ENCODE measurements at regions of chr1 and their contacts with region 1.

Region 1: DNA sequence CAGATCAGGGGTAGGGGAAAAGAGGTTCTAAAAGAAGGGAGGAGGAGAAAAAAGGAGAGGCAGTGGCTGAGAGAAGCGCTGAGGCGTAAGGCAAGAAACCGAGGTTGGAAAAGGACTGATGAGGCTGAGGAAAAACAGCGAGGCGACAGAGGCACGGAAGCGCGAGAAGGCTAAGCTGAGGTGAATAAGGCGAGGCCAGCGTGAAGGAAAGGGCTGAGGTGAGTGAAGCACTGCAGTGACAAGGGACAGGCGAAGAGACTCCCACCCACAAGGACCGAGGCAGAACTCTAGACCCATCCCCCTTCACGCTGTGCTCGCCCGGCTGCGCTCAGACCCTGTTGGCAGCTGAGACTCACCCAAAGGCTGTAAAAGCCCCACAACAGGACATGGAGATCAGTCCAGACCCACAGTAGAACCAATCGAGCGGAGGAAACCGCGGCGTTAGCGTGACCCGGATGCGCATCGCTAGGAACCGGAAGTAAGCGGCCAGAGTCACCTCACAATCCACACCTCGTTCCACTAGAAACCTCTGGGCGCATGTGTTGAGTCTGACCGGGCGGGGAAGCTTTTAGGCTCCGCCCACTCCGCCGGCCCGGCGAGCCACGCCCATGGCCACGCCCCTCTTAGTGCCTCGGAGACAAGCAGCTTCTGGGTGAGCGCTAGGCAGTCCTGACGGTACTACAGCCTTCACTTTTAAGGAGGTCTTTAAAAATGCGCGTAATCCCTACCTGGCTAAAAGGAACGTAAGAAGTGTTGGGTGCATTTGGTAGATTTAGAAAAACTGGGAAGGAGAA is at the start of gene EYA3:
- DNase-seq: peak; percentile 98
- H3K4me3 ChIP-seq: peak within 1 kb of the TSS; percentile 59 to 99 (median 89)
- H3K27ac ChIP-seq: peak within 1 kb of the TSS; percentile 80 to 92
- H3K4me1 ChIP-seq: peaks cover 7 to 28% (median 14%) of the 10 kb centered on the region in 4 experiments
- H3K27me3 ChIP-seq: no peaks in the 10 kb centered on the region

Region 2: GRCh38 chr1:28104866-28105467 is 16.6 kb after region 1 on chr1:
- CTCF ChIA-PET with region 1: interaction called, 27 read pairs
- POLR2A ChIA-PET with region 1: no interaction called
- DNase-seq: no peak
- H3K4me3 ChIP-seq: no peak overlapping the region
- H3K27ac ChIP-seq: no peak overlapping the region
- H3K4me1 ChIP-seq: no peaks in the 10 kb centered on the region
- H3K27me3 ChIP-seq: no peaks in the 10 kb centered on the region

Region 3: GRCh38 chr1:28115267-28115666 is 26.9 kb after region 1 on chr1:
- CTCF ChIA-PET with region 1: interaction called, 27 read pairs
- POLR2A ChIA-PET with region 1: no interaction called
- DNase-seq: peak; percentile 92 to 98 (median 97)
- H3K4me3 ChIP-seq: peak overlapping the region in 2 of 7 experiments; percentile 11 to 26
- H3K27ac ChIP-seq: peak overlapping the region in 1 of 2 experiments; percentile 73
- H3K4me1 ChIP-seq: peaks cover 4 to 54% (median 27%) of the 10 kb centered on the region in 4 experiments
- H3K27me3 ChIP-seq: no peaks in the 10 kb centered on the region

Region 4: DNA sequence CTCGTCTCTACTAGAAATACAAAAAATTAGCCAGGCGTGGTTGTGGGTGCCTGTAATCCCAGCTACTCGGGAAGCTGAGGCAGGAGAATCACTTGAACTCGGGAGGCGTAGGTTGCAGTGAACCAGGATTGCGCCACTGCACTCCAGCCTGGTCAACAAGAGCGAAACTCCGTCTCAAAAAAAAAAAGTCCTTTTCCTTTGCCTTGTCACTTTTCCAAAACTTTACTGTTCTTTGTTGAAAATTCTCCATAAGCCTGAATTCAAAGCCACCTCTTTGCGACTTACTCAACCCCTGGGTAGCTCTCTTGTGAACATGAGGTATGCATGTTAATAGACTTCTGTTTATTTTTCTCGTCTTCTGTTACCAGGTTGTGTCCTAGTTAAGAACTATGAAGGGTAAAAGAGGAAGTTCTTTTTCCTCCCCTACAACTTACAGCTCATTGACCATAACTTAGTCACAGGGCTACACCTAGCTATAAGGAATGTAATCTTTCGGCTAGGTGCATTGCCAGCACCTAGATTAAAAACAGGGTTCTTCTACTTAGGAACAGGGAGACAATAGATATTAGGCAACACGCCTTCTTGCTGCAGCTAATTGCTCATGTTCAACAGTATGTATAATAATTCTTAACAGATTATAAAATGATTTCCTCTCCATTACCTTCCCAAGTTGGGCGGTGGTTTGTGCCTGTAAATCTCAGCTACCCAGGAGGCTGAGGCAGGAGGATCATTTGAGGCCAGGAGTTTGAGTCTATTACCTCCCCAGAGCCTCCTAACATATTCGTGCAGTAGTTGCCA is 47.2 kb after region 1 on chr1:
- CTCF ChIA-PET with region 1: interaction called, 13 read pairs
- POLR2A ChIA-PET with region 1: no interaction called
- DNase-seq: peak in 2 of 3 donors; percentile 85 to 89
- H3K4me3 ChIP-seq: peak overlapping the region in 1 of 7 experiments; percentile 28
- H3K27ac ChIP-seq: no peak overlapping the region
- H3K4me1 ChIP-seq: peaks cover 2 to 39% (median 9%) of the 10 kb centered on the region in 4 experiments
- H3K27me3 ChIP-seq: no peaks in the 10 kb centered on the region

Region 5: GRCh38 chr1:28154078-28154594 is 65.8 kb after region 1 on chr1:
- CTCF ChIA-PET with region 1: interaction called, 12 read pairs
- POLR2A ChIA-PET with region 1: no interaction called
- DNase-seq: no peak
- H3K4me3 ChIP-seq: no peak overlapping the region
- H3K27ac ChIP-seq: no peak overlapping the region
- H3K4me1 ChIP-seq: peaks cover 5 to 24% (median 18%) of the 10 kb centered on the region in 4 experiments
- H3K27me3 ChIP-seq: no peaks in the 10 kb centered on the region

Region 6: DNA sequence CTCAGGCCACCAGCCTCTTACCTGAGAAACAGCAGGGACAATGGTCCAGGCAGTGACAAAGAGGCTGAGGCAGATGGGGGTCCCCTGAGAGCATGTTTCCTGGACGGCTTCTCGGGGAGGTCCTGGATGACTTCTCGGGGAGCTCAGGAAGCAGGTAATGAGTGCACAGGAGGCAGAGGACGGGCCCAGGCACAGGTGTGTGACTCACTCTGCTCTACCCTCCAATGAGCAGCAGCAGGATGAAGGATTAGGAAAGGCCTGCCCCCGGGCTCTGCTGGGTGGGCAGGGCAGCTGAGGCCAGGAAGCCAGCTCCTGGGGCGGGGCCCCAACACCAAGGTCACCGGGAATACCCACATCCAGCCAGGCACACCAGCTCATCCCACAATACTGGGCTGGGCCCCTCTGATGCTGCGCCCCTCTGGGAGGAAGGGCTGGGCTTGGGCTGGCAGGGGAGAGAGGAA is 105.4 kb after region 1 on chr1:
- CTCF ChIA-PET with region 1: interaction called, 25 read pairs
- POLR2A ChIA-PET with region 1: interaction called, 3 read pairs
- DNase-seq: no peak
- H3K4me3 ChIP-seq: no peak overlapping the region
- H3K27ac ChIP-seq: no peak overlapping the region
- H3K4me1 ChIP-seq: peaks cover 0 to 32% (median 19%) of the 10 kb centered on the region in 4 experiments
- H3K27me3 ChIP-seq: no peaks in the 10 kb centered on the region

Region 7: DNA sequence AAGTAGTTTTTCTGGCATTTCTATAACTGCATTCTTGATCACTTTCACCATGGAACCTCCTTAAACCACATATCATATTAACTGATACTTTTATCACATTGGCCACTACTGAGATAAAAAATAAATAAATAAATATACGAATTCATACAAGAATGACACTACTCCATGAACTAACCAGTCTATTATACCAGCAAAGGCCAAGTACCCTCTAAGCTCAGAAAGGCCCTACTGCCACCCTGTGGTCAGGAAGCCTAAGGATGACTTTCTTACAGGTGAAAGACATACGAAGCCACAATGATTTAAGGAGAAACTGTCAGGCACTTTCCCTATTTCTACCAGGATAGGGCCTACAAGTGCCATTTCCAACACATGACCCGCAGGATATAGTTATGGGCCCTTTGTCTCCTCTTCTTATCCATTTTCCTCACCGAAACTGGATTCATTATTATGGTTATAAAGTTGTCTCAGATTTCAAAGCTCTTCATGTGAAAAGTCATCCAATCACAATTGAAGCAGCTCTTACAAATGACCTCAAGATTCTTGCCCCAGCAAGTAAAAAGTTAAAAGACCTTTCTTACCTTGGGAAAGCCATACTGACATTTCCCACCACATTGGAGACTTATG is 120.6 kb after region 1 on chr1:
- CTCF ChIA-PET with region 1: interaction called, 164 read pairs
- POLR2A ChIA-PET with region 1: interaction called, 4 read pairs
- DNase-seq: peak; percentile 78 to 89 (median 85)
- H3K4me3 ChIP-seq: no peak overlapping the region
- H3K27ac ChIP-seq: no peak overlapping the region
- H3K4me1 ChIP-seq: peaks cover 0 to 4% (median 0%) of the 10 kb centered on the region in 4 experiments
- H3K27me3 ChIP-seq: no peaks in the 10 kb centered on the region

Region 8: GRCh38 chr1:28417429-28417922 is 329.1 kb after region 1 on chr1:
- CTCF ChIA-PET with region 1: no interaction called
- POLR2A ChIA-PET with region 1: no interaction called
- DNase-seq: peak; percentile 76 to 96 (median 93)
- H3K4me3 ChIP-seq: peak overlapping the region in 6 of 7 experiments; percentile 25 to 76 (median 54)
- H3K27ac ChIP-seq: peak overlapping the region; percentile 92 to 94
- H3K4me1 ChIP-seq: peaks cover 19 to 72% (median 49%) of the 10 kb centered on the region in 4 experiments
- H3K27me3 ChIP-seq: no peaks in the 10 kb centered on the region

Measured in common myeloid progenitor, CD34-positive (primary cell).